Activated CD4-positive, alpha-beta T cell treated with anti-CD3 and anti-CD28 coated beads, Interleukin-2, amount 10 ng/mL, durations not matched to agents 24 days and 14 days (primary cell): ENCODE measurements at regions of chr4 and their contacts with region 1.

Region 1: DNA sequence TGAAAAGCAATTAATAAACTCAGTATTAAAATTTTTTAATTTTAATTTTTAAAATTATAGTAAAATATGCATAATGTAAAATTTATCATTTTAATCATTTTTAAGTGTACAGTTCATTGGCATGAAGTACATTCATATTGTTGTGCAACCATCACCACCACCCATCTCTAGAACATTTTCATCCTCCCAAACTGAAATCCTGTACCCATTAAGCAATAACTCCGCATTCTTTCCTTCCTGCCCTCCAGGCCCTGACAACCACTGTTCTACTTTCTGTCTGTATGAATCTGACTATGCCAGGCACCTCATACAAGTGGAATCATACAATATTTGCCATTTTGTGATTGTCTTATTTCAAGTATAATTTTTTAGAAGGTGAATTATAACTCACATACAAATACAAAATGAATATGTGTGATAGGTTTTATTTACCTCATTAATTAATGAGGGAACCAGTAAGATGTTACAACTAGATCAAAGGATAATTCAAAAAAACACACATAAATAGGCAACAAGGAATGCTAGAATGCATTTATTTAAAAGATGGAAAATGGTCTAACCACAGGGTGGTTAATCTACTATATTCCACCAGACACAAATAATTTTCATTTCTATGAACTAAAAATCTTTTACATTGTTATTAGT is 13.1 kb upstream of the AFF1 start:
- DNase-seq: no peak
- H3K4me3 Mint-ChIP-seq: no peak overlapping the region
- H3K27ac Mint-ChIP-seq: no peak overlapping the region
- H3K4me1 Mint-ChIP-seq: peaks cover 3% of the 10 kb centered on the region
- H3K27me3 Mint-ChIP-seq: no peaks in the 10 kb centered on the region

Region 2: DNA sequence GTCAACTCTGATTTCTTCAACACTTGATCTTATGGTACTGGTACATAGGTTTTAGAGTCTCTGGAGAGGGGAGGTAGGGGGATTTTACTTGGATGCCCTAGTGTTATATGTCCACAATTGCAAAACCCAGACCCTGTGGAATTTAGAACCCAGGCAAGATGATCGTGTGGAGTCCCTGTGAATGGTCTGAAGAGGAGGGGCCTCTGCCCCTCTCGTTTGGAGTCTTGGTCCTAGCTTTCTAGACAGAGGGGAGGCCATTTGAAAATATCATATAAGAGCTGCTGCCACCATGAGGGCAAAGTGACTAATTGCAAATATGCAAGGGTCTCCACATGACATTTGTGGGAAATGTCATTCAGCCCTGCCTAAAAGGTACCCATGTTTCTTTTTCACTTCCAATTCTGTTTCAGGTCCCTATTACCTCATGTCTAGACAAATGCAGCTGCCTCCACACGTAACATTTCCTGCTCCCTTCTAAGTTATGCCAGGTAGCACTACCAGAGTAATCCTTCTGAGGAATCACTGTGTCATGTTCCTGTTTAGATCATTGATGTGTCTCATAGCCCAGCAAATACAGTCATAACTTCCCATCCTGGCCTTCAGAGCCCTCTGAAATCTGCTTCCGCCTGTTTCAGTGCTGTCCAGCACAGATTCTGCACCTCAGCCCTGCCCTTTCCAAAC is 171.9 kb after region 1 on chr4:
- intact Hi-C with region 1: loop called (anchors 1 kb)
- DNase-seq: peak; percentile 80
- H3K4me3 Mint-ChIP-seq: no peak overlapping the region
- H3K27ac Mint-ChIP-seq: peak overlapping the region; percentile 34
- H3K4me1 Mint-ChIP-seq: peaks cover 22% of the 10 kb centered on the region
- H3K27me3 Mint-ChIP-seq: no peaks in the 10 kb centered on the region